Endothelial cell of umbilical vein (primary cell): ENCODE measurements at regions of chr7 and their contacts with region 1.

Region 1: DNA sequence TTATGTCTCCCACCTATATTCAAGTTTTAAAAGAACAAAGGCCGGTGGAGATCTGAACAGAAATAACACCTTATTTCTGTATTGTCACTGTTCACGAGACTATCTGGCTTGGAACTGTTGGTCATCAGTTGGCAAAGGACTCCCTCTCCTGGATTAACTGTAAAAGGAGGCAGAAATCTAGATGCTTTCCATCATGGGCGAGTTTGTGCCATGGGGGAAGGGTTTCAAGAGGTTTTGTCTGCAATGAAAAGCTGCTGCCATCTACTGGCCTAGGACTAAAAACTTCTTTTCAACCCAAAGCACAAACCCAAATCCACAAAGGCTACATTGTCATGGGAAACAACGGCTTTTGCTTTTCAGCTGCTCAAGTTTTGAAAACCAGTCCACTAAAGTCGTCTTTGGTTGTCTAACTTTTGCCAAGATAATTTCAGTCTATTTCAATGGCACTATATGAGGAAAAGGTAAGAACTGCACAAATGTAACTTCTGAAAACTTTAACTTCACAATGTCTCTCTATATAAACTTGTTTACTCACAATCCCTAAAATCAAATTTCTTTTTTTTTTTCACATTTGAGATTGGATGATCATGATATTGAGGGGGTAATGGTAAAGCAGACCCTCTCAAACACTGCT is 196.8 kb downstream of the SKAP2 start:
- DNase-seq: peak; percentile 96
- H3K4me3 ChIP-seq: no peak overlapping the region
- H3K27ac ChIP-seq: no peak overlapping the region
- H3K4me1 ChIP-seq: peaks cover 3% of the 10 kb centered on the region
- H3K27me3 ChIP-seq: no peaks in the 10 kb centered on the region
- CTCF ChIP-seq: peak; percentile 80 to 91
- POLR2A ChIP-seq: no peak

Region 2: DNA sequence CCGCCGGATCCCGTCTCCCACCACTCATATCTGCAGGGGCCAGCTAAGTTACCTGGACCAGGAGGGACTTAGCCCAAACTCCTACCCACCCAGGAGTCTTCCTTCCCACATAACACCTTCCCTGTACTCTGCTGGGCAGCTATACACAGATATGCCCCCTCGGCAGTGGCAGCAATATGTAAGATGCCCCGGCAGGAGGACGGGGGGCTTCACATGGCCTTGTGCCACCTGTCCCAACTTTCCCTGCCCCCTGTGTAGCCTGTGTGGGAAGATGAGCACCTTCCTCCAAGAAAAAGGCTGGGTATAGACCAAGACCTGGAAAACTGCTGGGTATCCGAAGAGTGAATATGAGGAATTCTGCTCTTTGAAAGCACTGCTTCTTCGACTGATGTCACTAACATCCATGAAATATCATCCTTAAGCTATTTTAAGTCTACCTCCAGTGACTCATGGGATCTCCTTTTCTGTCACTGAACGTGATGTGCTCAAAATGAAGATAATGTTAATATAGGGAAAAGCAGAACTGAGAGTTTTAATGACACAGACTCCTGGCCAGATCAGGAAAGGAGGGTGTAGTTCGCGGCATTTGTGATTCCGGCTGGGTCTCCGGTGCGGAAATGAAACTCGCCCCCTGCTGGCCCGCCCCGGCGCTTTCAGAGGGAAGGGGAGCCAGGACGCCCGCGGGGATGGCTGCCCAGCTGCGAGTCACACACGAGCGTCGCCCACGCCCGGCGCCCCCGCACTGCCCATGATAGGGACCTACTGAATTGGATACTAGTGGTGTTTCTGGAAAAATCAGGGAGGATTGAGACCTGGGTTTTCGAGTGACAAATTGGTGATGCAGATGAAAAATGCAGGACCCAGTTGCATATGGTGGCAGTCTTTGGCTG is 772.5 kb before region 1 on chr7:
- CTCF ChIA-PET with region 1: interaction called, 60 read pairs
- POLR2A ChIA-PET with region 1: no interaction called
- dilution Hi-C with region 1: no loop called
- intact Hi-C with region 1: loop called (anchors 1 kb)
- DNase-seq: peak; percentile 32
- H3K4me3 ChIP-seq: no peak overlapping the region
- H3K27ac ChIP-seq: no peak overlapping the region
- H3K4me1 ChIP-seq: peaks cover 16% of the 10 kb centered on the region
- H3K27me3 ChIP-seq: peaks cover under 1 to 11% of the 10 kb centered on the region in 2 experiments
- CTCF ChIP-seq: peak; percentile 78 to 79
- POLR2A ChIP-seq: no peak

Region 3: GRCh38 chr7:26090927-26091519 is 576.6 kb before region 1 on chr7:
- CTCF ChIA-PET with region 1: interaction called, 10 read pairs
- POLR2A ChIA-PET with region 1: no interaction called
- dilution Hi-C with region 1: no loop called
- intact Hi-C with region 1: loop called (anchors 1 kb)
- DNase-seq: peak; percentile 74
- H3K4me3 ChIP-seq: no peak overlapping the region
- H3K27ac ChIP-seq: no peak overlapping the region
- H3K4me1 ChIP-seq: no peaks in the 10 kb centered on the region
- H3K27me3 ChIP-seq: peaks cover 0 to 3% of the 10 kb centered on the region in 2 experiments
- CTCF ChIP-seq: peak; percentile 54 to 62
- POLR2A ChIP-seq: no peak

Region 4: DNA sequence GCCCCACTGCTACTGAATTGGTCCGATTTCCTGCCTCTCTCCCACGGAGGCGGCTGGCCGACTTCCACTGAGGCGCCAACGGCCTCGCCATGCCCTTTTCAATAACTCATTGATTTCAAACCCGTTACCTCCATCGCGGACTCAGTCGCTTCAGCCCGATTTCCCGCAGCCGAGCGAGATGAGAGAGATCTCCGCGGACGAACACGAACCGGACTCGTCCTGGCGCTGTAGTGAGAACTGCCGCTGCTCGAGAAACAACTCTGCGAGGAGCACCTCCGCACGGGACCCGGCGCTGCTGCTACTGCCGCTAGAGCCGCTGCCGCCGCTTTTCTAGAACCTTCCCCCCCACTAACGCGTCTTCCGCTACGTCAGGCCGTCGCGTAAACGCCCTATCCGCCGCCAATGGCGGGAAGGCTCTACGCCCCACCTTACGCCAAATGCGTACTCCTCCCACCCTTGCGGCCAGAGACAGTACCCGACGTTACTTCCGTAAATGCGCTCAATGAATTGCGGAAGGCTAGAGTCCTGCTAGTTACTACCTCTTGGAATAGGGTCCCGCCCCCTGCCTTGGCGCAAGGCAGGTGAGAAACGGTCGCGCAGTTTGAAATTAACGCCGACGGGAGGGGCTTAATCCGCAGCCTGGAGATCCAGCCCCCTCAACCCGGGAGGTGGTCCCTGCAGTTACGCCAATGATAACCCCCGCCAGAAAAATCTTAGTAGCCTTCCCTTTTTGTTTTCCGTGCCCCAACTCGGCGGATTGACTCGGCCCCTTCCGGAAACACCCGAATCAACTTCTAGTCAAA is 467.0 kb before region 1 on chr7 and contains the start of gene HNRNPA2B1:
- CTCF ChIA-PET with region 1: interaction called, 9 read pairs
- POLR2A ChIA-PET with region 1: no interaction called
- dilution Hi-C with region 1: no loop called
- intact Hi-C with region 1: loop called (anchors 1 kb)
- DNase-seq: peak; percentile 99
- H3K4me3 ChIP-seq: peak within 1 kb of the TSS; percentile 98 to 100 (median 98)
- H3K27ac ChIP-seq: peak within 1 kb of the TSS; percentile 97
- H3K4me1 ChIP-seq: peaks cover 40% of the 10 kb centered on the region
- H3K27me3 ChIP-seq: no peaks in the 10 kb centered on the region
- CTCF ChIP-seq: no peak
- POLR2A ChIP-seq: peak; percentile 100
- total RNA-seq, gene HNRNPA2B1: 703 and 717 TPM in 2 replicates

Region 5: GRCh38 chr7:26398756-26399501 is 268.7 kb before region 1 on chr7:
- CTCF ChIA-PET with region 1: interaction called, 4 read pairs
- POLR2A ChIA-PET with region 1: no interaction called
- dilution Hi-C with region 1: no loop called
- intact Hi-C with region 1: loop called (anchors 1 kb)
- DNase-seq: peak; percentile 78
- H3K4me3 ChIP-seq: peak overlapping the region; percentile 12 to 65 (median 61)
- H3K27ac ChIP-seq: peak overlapping the region; percentile 39
- H3K4me1 ChIP-seq: peaks cover 11% of the 10 kb centered on the region
- H3K27me3 ChIP-seq: no peaks in the 10 kb centered on the region
- CTCF ChIP-seq: peak; percentile 42 to 65
- POLR2A ChIP-seq: no peak

Region 6: DNA sequence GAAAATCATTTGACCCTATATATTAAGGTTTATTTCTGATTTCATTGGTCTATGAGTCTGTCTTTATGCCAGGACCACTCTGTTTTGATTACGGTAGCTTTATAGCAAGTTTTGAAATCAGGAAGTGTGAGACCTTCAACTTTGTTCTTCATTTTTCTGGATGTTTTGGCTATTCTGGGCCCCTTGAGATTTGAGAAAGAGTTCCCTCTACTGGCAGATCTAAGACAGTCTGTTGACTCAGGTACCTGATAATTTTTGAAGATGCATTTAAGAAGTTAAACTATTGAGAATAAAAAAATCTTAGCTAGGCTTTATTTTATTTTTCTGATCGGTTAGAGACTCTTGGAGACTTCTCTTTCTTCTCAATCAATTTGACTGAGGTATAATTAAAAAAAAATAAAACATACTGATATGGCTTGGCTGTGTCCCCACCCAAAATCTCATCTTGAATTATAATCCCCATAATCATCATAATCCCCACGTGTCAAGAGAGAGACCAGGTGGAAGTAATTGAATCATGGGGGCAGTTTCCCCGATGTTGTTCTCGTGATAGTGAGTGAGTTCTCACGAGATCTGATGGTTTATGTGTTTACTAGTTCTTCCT is 166.8 kb before region 1 on chr7:
- CTCF ChIA-PET with region 1: interaction called, 14 read pairs
- POLR2A ChIA-PET with region 1: no interaction called
- dilution Hi-C with region 1: no loop called
- intact Hi-C with region 1: loop called (anchors 1 kb)
- DNase-seq: peak; percentile 52
- H3K4me3 ChIP-seq: no peak overlapping the region
- H3K27ac ChIP-seq: no peak overlapping the region
- H3K4me1 ChIP-seq: no peaks in the 10 kb centered on the region
- H3K27me3 ChIP-seq: peaks cover 2 to 3% of the 10 kb centered on the region in 2 experiments
- CTCF ChIP-seq: peak; percentile 25 to 29
- POLR2A ChIP-seq: no peak

Region 7: GRCh38 chr7:26686448-26686981 is 18.9 kb after region 1 on chr7:
- CTCF ChIA-PET with region 1: interaction called, 10 read pairs
- POLR2A ChIA-PET with region 1: no interaction called
- dilution Hi-C with region 1: no loop called
- intact Hi-C with region 1: no loop called
- DNase-seq: peak; percentile 90
- H3K4me3 ChIP-seq: no peak overlapping the region
- H3K27ac ChIP-seq: peak overlapping the region; percentile 78
- H3K4me1 ChIP-seq: peaks cover 91% of the 10 kb centered on the region
- H3K27me3 ChIP-seq: no peaks in the 10 kb centered on the region
- CTCF ChIP-seq: peak; percentile 23 to 35
- POLR2A ChIP-seq: no peak